Naive thymus-derived CD4-positive, alpha-beta T cell (primary cell): ENCODE measurements at regions of chr12 and their contacts with region 1.

Region 1: DNA sequence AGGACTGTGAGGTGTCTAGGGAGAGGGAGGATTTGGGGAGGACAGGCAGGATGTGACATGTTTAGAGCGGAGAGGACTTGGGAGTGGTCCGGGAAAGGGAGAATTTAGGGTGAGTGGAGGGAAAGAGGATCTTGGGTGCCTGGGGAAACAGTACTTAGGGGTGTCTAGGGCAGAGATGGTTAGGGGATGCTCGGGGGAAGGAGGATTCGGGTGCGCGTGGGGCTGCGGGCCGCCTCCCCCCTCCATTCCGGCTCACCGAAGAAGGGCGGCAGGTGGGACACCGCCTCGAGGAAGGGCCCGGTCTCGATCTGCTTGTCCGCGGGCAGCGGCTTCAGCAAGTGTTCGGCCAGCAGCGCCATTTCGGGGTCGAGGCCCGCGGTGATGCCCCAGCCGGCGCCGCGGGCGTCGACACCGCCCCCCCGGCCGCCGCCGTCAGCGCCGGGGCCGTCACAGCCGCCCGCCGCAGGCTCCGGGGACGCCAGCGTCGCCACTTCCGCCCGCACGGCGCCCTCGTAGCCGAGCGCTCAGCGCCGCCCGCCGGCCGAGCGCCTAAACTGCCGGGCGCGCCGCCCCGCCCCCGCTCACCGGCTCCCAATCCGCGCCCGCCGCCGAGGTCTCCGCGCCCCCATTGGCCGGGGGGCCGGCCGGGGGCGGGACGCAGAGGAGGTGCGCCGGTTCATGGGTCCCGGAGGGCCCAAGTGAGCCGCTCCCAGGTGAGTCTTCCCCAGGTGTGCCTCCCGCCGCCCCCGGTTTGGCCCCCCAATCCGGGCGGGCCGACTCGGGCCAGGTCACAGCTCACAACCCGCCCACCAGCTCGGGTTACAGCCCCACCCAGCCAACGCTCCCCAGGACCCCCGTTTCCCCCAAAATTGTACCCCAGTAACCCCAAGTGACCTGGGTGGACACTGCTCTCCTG is at the start of gene GLTP:
- DNase-seq: peak; percentile 82 to 96 (median 94)
- ATAC-seq: peak; percentile 98
- H3K4me3 ChIP-seq: peak within 1 kb of the TSS; percentile 92
- H3K4me3 Mint-ChIP-seq: peak within 1 kb of the TSS; percentile 84 to 97 (median 94)
- H3K27ac ChIP-seq: peak within 1 kb of the TSS; percentile 88
- H3K27ac Mint-ChIP-seq: peak within 1 kb of the TSS; percentile 77 to 97 (median 90)
- H3K4me1 ChIP-seq: peaks cover 24 to 25% of the 10 kb centered on the region in 2 donors
- H3K4me1 Mint-ChIP-seq: peaks cover 27 to 54% (median 50%) of the 10 kb centered on the region in 7 donors
- H3K27me3 ChIP-seq: no peaks in the 10 kb centered on the region
- H3K27me3 Mint-ChIP-seq: peaks cover 0 to 15% (median 0%) of the 10 kb centered on the region in 5 donors
- total RNA-seq, gene GLTP: 19.2 to 36.2 (median 22.1) TPM

Region 2: GRCh38 chr12:109518820-109519665 is 361.2 kb before region 1 on chr12:
- CTCF ChIA-PET with region 1: no interaction called
- POLR2A ChIA-PET with region 1: no interaction called
- intact Hi-C with region 1: loop called in 1 of 2 experiments (anchors 1 kb)
- DNase-seq: peak; percentile 18 to 58 (median 41)
- ATAC-seq: peak; percentile 77
- H3K4me3 ChIP-seq: no peak overlapping the region
- H3K4me3 Mint-ChIP-seq: no peak overlapping the region
- H3K27ac ChIP-seq: no peak overlapping the region
- H3K27ac Mint-ChIP-seq: peak overlapping the region in 4 of 9 donors; percentile 29 to 76 (median 45)
- H3K4me1 ChIP-seq: no peaks in the 10 kb centered on the region
- H3K4me1 Mint-ChIP-seq: peaks cover 0 to 12% (median 0%) of the 10 kb centered on the region in 7 donors
- H3K27me3 ChIP-seq: no peaks in the 10 kb centered on the region
- H3K27me3 Mint-ChIP-seq: no peaks in the 10 kb centered on the region

Region 3: DNA sequence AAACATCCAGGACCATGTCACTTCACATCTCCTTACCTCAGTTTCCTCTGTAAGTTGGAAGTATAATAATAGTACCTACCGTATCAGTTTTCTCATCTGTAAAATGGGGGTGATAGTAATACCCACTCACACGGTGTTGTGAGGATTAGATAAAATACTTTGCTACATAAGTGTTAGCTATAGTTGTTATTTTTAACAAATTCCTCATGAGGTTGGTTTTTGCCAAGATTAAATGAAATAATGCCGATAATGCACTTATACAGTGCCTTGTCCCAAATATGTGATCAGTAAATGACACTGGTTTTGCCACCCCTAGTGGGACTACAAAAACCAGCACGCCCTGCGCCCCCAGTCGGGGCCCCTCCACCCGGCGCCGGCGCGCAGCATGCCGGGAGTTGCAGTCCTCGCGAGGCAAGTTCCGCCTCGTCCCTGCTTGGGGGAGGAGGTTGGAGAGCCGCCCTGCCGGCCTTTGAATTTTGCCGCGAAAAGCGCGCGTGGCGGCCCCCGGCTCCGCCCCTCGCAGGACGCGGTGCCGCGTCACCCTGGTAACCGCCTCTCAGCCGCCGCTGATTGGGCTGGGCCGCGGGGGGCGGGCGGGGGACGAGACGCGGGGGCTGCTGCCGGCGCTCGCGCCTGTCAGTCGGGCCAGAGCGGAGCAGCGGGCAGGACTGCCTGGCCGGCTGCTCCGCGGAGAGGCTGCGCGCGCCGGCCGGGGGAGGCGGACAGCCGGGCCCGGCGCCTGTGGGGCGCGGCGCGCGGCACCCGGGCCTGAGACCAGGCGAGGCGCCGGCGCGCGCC is 166.9 kb before region 1 on chr12 and contains the start of gene FAM222A:
- CTCF ChIA-PET with region 1: no interaction called
- POLR2A ChIA-PET with region 1: no interaction called
- intact Hi-C with region 1: loop called (anchors 1 kb)
- DNase-seq: peak; percentile 94 to 99 (median 98)
- ATAC-seq: peak; percentile 94
- H3K4me3 ChIP-seq: peak within 1 kb of the TSS; percentile 41
- H3K4me3 Mint-ChIP-seq: peak within 1 kb of the TSS; percentile 57 to 81 (median 72)
- H3K27ac ChIP-seq: peak within 1 kb of the TSS; percentile 55
- H3K27ac Mint-ChIP-seq: peak within 1 kb of the TSS in 1 of 9 donors; percentile 48
- H3K4me1 ChIP-seq: peaks cover 3 to 11% of the 10 kb centered on the region in 2 donors
- H3K4me1 Mint-ChIP-seq: peaks cover 0 to 4% (median 0%) of the 10 kb centered on the region in 7 donors
- H3K27me3 ChIP-seq: peaks cover 0 to 6% of the 10 kb centered on the region in 2 donors
- H3K27me3 Mint-ChIP-seq: peaks cover 29 to 65% (median 30%) of the 10 kb centered on the region in 5 donors
- total RNA-seq, gene FAM222A: 0.24 to 1.6 (median 0.80) TPM

Region 4: DNA sequence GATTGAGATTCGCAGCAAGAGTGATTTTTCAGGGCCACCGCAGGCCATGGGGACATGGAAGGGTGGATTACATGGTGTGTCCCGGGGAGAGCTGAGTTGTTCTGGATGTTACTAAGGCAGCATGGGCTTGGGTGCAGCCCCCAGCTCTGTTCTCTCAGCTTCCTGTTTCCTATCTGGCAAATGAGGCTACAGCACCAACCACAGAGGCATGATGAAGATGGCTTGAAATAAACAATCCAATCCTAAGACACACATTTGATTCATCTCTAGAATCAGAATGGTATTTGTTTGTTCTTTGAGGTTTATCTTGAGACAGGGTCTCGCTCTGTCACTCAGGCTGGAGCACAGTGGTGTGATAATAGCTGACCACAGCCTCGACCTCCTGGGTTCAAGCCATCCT is 21.5 kb before region 1 on chr12:
- CTCF ChIA-PET with region 1: interaction called, 4 read pairs
- POLR2A ChIA-PET with region 1: interaction called, 5 read pairs
- intact Hi-C with region 1: loop called (anchors 1 kb)
- DNase-seq: no peak
- ATAC-seq: no peak
- H3K4me3 ChIP-seq: no peak overlapping the region
- H3K4me3 Mint-ChIP-seq: no peak overlapping the region
- H3K27ac ChIP-seq: peak overlapping the region; percentile 35
- H3K27ac Mint-ChIP-seq: peak overlapping the region in 3 of 9 donors; percentile 47 to 81 (median 80)
- H3K4me1 ChIP-seq: peaks cover 0 to 8% of the 10 kb centered on the region in 2 donors
- H3K4me1 Mint-ChIP-seq: peaks cover 0 to 8% (median 6%) of the 10 kb centered on the region in 7 donors
- H3K27me3 ChIP-seq: no peaks in the 10 kb centered on the region
- H3K27me3 Mint-ChIP-seq: no peaks in the 10 kb centered on the region

Region 5: DNA sequence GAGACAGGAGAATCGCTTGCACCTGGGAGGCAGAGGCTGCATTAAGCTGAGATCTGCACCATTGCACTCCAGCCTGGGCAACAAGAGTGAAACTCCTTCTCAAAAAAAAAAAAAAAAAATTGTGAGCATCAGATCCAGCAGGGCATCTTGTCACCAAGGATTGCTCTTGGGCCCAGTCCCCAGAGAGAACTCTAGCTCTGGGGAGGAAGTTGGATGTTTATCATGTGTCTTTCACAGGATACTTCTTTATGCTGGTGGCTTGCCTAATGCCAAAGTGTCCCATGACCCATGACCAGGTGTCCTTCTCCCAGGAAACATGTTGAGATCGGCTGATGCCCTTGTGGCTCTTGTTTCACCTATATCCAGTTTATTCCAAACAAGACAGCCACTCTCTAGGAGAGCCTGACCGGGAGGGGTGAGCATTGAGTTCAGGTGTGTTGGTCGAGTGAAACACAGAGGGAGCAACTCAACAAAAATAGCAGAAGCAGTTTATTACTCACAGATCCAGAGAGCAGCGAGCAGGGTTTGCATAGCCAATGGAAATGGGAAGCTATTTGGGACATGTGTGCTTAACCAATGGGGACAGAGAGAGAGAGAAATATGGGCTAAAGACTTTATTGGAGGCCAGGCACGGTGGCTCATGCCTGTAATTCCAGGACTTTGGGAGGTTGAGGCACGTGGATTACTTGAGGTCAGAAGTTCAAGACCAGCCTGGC is 13.2 kb after region 1 on chr12:
- CTCF ChIA-PET with region 1: no interaction called
- POLR2A ChIA-PET with region 1: no interaction called
- intact Hi-C with region 1: no loop called
- DNase-seq: no peak
- ATAC-seq: no peak
- H3K4me3 ChIP-seq: no peak overlapping the region
- H3K4me3 Mint-ChIP-seq: no peak overlapping the region
- H3K27ac ChIP-seq: no peak overlapping the region
- H3K27ac Mint-ChIP-seq: peak overlapping the region in 1 of 9 donors; percentile 58
- H3K4me1 ChIP-seq: peaks cover 6 to 28% of the 10 kb centered on the region in 2 donors
- H3K4me1 Mint-ChIP-seq: peaks cover 5 to 35% (median 32%) of the 10 kb centered on the region in 7 donors
- H3K27me3 ChIP-seq: no peaks in the 10 kb centered on the region
- H3K27me3 Mint-ChIP-seq: no peaks in the 10 kb centered on the region

Region 6: DNA sequence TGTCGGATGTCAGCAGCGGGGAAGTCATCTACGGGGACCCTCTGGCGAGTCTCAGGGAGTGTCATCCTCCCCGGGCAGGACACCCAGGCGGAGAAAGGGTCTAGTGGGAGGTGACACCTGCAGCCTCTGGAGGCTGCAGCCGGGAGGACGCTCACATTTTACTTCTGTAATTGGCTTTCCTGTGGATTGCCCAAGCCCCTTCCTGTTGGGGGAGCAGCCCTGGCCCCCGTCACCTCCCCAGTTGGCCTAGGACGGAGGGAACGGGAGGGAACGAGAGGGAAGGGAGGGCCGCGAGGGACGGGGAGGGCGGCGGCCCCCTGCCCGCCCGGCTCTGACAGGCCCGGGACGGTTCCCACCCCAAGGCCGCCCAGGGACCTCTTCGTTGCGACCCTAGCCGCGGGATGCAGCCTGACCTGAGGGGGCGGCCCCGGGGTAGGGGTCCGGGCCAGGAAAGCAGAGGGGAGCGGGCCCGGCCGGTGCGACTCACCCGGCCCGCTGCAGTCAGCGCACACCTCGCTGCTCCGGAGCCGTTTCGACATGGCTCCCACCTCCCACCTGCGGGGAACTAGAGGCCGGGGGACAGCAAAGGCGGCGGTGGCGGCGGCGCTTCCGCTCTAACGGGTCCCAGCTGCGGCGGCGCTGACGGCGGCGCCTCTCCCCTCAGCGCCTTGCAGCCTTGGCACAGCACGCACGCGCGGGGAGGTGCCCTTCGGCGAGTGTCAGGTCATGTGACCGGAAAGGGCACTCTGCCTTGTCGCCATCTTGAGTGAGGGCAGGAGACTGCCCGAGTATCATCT is 115.6 kb after region 1 on chr12 and contains the start of gene GIT2:
- CTCF ChIA-PET with region 1: no interaction called
- POLR2A ChIA-PET with region 1: no interaction called
- intact Hi-C with region 1: loop called (anchors 1 to 5 kb)
- DNase-seq: peak; percentile 88 to 95 (median 93)
- ATAC-seq: peak; percentile 81
- H3K4me3 ChIP-seq: peak within 1 kb of the TSS; percentile 86
- H3K4me3 Mint-ChIP-seq: peak within 1 kb of the TSS; percentile 90 to 100 (median 96)
- H3K27ac ChIP-seq: peak within 1 kb of the TSS; percentile 84
- H3K27ac Mint-ChIP-seq: peak within 1 kb of the TSS; percentile 84 to 100 (median 96)
- H3K4me1 ChIP-seq: peaks cover 22 to 33% of the 10 kb centered on the region in 2 donors
- H3K4me1 Mint-ChIP-seq: peaks cover 42 to 77% (median 66%) of the 10 kb centered on the region in 7 donors
- H3K27me3 ChIP-seq: no peaks in the 10 kb centered on the region
- H3K27me3 Mint-ChIP-seq: no peaks in the 10 kb centered on the region
- total RNA-seq, gene GIT2: 70.3 to 128 (median 109) TPM

Region 7: DNA sequence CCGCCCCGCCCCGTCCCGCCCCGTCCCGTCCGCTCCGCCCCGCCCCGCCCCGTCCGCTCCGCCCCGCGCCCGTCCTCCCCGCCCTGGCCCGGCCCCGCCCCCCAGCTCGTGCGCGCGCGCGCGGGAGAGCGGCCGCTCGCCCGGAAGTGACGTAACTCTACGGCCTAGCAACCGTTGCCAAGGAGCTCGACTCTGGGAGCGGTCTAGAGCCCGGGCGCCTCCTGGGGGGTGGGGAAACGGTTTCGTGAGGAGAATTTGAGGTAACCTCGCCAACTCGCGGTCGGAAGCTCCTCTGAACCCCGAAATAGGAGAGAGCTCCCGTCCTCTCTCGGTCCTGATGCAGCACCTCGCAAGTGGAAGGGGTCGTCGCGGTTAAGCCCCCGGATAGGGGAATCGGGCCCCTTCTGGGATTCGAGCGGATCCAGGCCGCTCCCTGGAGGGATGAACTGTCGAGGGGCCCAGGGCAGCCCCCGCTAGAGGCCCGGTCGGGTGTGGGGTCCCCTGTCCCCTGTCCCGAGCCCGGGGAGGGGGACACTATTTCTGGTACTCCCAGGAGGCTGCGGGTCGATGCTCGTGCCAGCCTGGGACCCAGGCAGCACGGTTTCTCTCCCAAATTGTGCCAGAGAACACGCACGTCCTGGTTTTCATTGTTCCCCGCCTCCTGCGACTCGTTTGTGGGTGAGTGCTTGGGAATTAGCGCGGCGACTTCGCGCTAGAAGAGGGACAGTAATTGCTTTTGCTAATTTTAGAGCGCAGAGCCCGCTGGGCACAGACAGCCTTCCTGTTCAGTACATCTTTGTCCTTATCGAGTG is 244.1 kb after region 1 on chr12 and contains the start of gene IFT81:
- CTCF ChIA-PET with region 1: no interaction called
- POLR2A ChIA-PET with region 1: no interaction called
- intact Hi-C with region 1: loop called in 1 of 2 experiments (anchors 1 kb)
- DNase-seq: peak; percentile 84 to 98 (median 93)
- ATAC-seq: peak; percentile 98
- H3K4me3 ChIP-seq: peak within 1 kb of the TSS; percentile 99
- H3K4me3 Mint-ChIP-seq: peak within 1 kb of the TSS; percentile 83 to 94 (median 92)
- H3K27ac ChIP-seq: peak within 1 kb of the TSS; percentile 84
- H3K27ac Mint-ChIP-seq: peak within 1 kb of the TSS; percentile 56 to 94 (median 90)
- H3K4me1 ChIP-seq: peaks cover 4 to 5% of the 10 kb centered on the region in 2 donors
- H3K4me1 Mint-ChIP-seq: peaks cover 0 to 9% (median 8%) of the 10 kb centered on the region in 7 donors
- H3K27me3 ChIP-seq: no peaks in the 10 kb centered on the region
- H3K27me3 Mint-ChIP-seq: peaks cover 0 to 52% (median 0%) of the 10 kb centered on the region in 5 donors
- total RNA-seq, gene IFT81: 0.66 to 1.3 (median 1.3) TPM